ENCODE measurements at regions of chr12 and their contacts with region 1.

Region 1: DNA sequence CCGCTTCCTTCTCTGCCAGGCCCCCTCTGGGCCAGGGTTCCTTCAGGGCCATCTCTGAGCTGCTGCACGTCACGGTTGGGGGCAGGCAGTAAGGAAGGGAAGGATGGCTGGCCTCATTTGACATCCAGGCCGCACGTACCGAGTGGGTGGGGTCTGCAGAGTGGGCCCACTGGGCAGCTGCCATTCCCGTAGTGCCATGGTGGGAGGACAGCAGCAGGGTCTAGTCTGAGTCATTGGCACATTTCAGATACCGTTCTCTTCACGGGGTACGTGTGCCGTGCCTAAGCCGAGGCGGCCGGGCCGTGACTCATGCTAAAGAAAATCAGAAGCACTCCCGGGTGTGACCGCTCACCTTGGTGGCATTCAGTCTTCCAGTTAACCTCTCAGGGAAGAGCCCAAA is 43.9 kb downstream of the IL31 start:
- DNase-seq: no peak
- H3K4me3 ChIP-seq: no peak overlapping the region
- H3K27ac ChIP-seq: no peak overlapping the region
- H3K4me1 ChIP-seq: peaks cover 0 to 4% (median 2%) of the 10 kb centered on the region in 4 experiments; a peak in 2 of 7 replicates
- H3K27me3 ChIP-seq: no peaks in the 10 kb centered on the region
- CTCF ChIP-seq: no peak
- EP300 ChIP-seq: no peak
- POLR2A ChIP-seq: no peak
- RAD21 ChIP-seq: no peak

Region 2: GRCh38 chr12:121933522-121934308 is 196.4 kb before region 1 on chr12:
- CTCF ChIA-PET with region 1: no interaction called
- POLR2A ChIA-PET with region 1: no interaction called
- DNase-seq: peak in 1 of 2 experiments; percentile 39
- H3K4me3 ChIP-seq: no peak overlapping the region
- H3K27ac ChIP-seq: no peak overlapping the region
- H3K4me1 ChIP-seq: peaks cover 2 to 12% (median 6%) of the 10 kb centered on the region in 4 experiments
- H3K27me3 ChIP-seq: no peaks in the 10 kb centered on the region
- CTCF ChIP-seq: peak; percentile 29 to 49 (median 38); a peak in 3 of 4 replicates
- EP300 ChIP-seq: no peak
- POLR2A ChIP-seq: no peak
- RAD21 ChIP-seq: peak in 1 of 2 experiments; percentile 53; a peak in 3 of 4 replicates

Region 3: DNA sequence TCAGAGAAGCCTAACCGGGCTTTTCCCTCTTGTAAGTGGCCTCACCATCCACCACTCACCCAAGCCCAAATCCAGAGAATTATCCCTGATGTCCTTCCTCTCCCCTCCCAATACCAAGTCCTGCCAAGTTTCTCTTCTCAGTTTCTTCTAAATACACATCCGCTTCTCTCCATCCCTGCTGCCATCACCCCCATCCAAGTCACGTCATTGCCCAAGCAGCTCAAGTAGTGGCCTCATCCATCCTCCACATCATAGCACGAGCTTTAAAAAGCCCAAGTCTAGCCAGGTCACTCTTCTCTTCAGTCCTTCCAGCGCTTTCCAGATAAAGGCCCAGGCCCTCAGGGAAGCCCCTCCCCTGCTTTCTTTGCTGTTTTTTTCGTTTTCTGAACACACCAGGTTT is 18.5 kb after region 1 on chr12:
- CTCF ChIA-PET with region 1: interaction called, 11 read pairs
- POLR2A ChIA-PET with region 1: interaction called, 3 read pairs
- DNase-seq: no peak
- H3K4me3 ChIP-seq: no peak overlapping the region
- H3K27ac ChIP-seq: no peak overlapping the region
- H3K4me1 ChIP-seq: peaks cover 0 to 5% (median 0%) of the 10 kb centered on the region in 4 experiments; a peak in 1 of 7 replicates
- H3K27me3 ChIP-seq: no peaks in the 10 kb centered on the region
- CTCF ChIP-seq: no peak
- EP300 ChIP-seq: no peak
- POLR2A ChIP-seq: no peak
- RAD21 ChIP-seq: no peak

Region 4: DNA sequence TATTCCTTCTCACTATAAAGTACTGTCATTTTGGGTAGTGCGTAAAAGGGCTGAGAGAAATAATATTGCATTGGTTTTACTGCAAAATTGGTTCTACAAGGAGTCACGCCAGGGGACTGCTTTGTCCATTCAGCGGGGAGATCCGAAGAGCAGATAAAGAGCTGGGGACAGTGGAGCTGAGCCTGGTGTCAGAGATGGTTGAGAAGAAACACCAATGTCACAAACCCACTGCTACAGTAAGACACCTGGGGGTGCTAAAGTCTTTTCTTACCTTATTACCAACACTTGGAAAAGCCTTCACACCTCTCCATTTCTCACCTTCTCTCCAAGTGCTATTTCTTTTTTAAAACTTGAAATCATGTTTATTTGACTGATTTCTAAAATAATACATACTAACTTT is 29.7 kb after region 1 on chr12:
- CTCF ChIA-PET with region 1: interaction called, 10 read pairs
- POLR2A ChIA-PET with region 1: interaction called, 3 read pairs
- DNase-seq: no peak
- H3K4me3 ChIP-seq: no peak overlapping the region
- H3K27ac ChIP-seq: no peak overlapping the region
- H3K4me1 ChIP-seq: no peaks in the 10 kb centered on the region; a peak in 1 of 7 replicates
- H3K27me3 ChIP-seq: no peaks in the 10 kb centered on the region
- CTCF ChIP-seq: peak in 1 of 3 experiments; percentile 21; a peak in 1 of 4 replicates
- EP300 ChIP-seq: no peak
- POLR2A ChIP-seq: no peak
- RAD21 ChIP-seq: peak; percentile 41 to 50